Naive thymus-derived CD4-positive, alpha-beta T cell (primary cell): ENCODE measurements at regions of chr12 and their contacts with region 1.

Region 1: GRCh38 chr12:26113853-26114719 is 10.8 kb downstream of the BHLHE41 start:
- DNase-seq: peak; percentile 48 to 70 (median 65)
- ATAC-seq: peak; percentile 88
- H3K4me3 ChIP-seq: peak overlapping the region; percentile 53
- H3K4me3 Mint-ChIP-seq: peak overlapping the region; percentile 72 to 90 (median 82)
- H3K27ac ChIP-seq: peak overlapping the region; percentile 54
- H3K27ac Mint-ChIP-seq: peak overlapping the region in 7 of 9 donors; percentile 44 to 83 (median 63)
- H3K4me1 ChIP-seq: peaks cover 0 to 5% of the 10 kb centered on the region in 2 donors
- H3K4me1 Mint-ChIP-seq: peaks cover 5 to 14% (median 8%) of the 10 kb centered on the region in 7 donors
- H3K27me3 ChIP-seq: no peaks in the 10 kb centered on the region
- H3K27me3 Mint-ChIP-seq: peaks cover 2 to 80% (median 32%) of the 10 kb centered on the region in 5 donors

Region 2: GRCh38 chr12:25811656-25812126 is 302.4 kb before region 1 on chr12:
- CTCF ChIA-PET with region 1: no interaction called
- POLR2A ChIA-PET with region 1: no interaction called
- intact Hi-C with region 1: no loop called
- DNase-seq: no peak
- ATAC-seq: no peak
- H3K4me3 ChIP-seq: no peak overlapping the region
- H3K4me3 Mint-ChIP-seq: no peak overlapping the region
- H3K27ac ChIP-seq: no peak overlapping the region
- H3K27ac Mint-ChIP-seq: peak overlapping the region in 1 of 9 donors; percentile 1
- H3K4me1 ChIP-seq: no peaks in the 10 kb centered on the region
- H3K4me1 Mint-ChIP-seq: peaks cover 0 to 26% (median 6%) of the 10 kb centered on the region in 7 donors
- H3K27me3 ChIP-seq: no peaks in the 10 kb centered on the region
- H3K27me3 Mint-ChIP-seq: peaks cover 0 to 7% (median 4%) of the 10 kb centered on the region in 5 donors

Region 3: GRCh38 chr12:26523708-26524150 is 409.6 kb after region 1 on chr12:
- CTCF ChIA-PET with region 1: no interaction called
- POLR2A ChIA-PET with region 1: no interaction called
- intact Hi-C with region 1: loop called in 1 of 2 experiments (anchors 10 kb)
- DNase-seq: no peak
- ATAC-seq: peak; percentile 85
- H3K4me3 ChIP-seq: no peak overlapping the region
- H3K4me3 Mint-ChIP-seq: no peak overlapping the region
- H3K27ac ChIP-seq: no peak overlapping the region
- H3K27ac Mint-ChIP-seq: no peak overlapping the region
- H3K4me1 ChIP-seq: no peaks in the 10 kb centered on the region
- H3K4me1 Mint-ChIP-seq: peaks cover 8 to 27% (median 18%) of the 10 kb centered on the region in 7 donors
- H3K27me3 ChIP-seq: no peaks in the 10 kb centered on the region
- H3K27me3 Mint-ChIP-seq: no peaks in the 10 kb centered on the region